ENCODE measurements at regions of chr7 and their contacts with region 1.

Region 1: GRCh38 chr7:51141451-51142003 is 175.1 kb downstream of the COBL start:
- DNase-seq: peak; percentile 16
- ATAC-seq: peak; percentile 24
- H3K4me3 Mint-ChIP-seq: no peak overlapping the region
- H3K27ac Mint-ChIP-seq: no peak overlapping the region
- H3K4me1 Mint-ChIP-seq: peaks cover 3% of the 10 kb centered on the region
- H3K27me3 Mint-ChIP-seq: no peaks in the 10 kb centered on the region
- CTCF ChIP-seq: peak; percentile 69

Region 2: DNA sequence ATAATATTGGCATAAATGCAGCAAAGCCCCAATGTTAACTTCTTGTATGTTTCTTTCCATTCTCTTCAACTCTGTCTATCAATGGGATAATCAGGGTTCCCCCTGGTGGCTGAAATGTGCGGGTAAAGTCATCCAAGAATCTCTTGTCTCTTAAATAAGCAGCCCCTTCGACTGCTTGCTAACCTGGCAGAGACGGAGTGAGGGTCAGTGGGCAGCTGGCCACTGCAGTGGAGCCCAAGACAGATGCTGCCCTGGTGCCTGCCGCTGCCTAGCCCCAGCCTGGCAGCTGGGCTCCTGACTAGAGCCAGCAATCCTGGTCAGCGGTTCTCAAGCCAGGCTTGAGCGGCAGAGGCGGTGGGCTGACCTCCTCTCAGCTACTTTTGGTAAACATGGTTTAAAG is 73.8 kb before region 1 on chr7:
- CTCF ChIA-PET with region 1: interaction called, 12 read pairs
- POLR2A ChIA-PET with region 1: no interaction called
- intact Hi-C with region 1: no loop called
- DNase-seq: peak; percentile 75
- ATAC-seq: no peak
- H3K4me3 Mint-ChIP-seq: no peak overlapping the region
- H3K27ac Mint-ChIP-seq: no peak overlapping the region
- H3K4me1 Mint-ChIP-seq: no peaks in the 10 kb centered on the region
- H3K27me3 Mint-ChIP-seq: no peaks in the 10 kb centered on the region
- CTCF ChIP-seq: peak; percentile 13

Region 3: GRCh38 chr7:51154201-51154600 is 12.7 kb after region 1 on chr7:
- CTCF ChIA-PET with region 1: interaction called, 10 read pairs
- POLR2A ChIA-PET with region 1: no interaction called
- intact Hi-C with region 1: no loop called
- DNase-seq: no peak
- ATAC-seq: no peak
- H3K4me3 Mint-ChIP-seq: no peak overlapping the region
- H3K27ac Mint-ChIP-seq: no peak overlapping the region
- H3K4me1 Mint-ChIP-seq: no peaks in the 10 kb centered on the region
- H3K27me3 Mint-ChIP-seq: peaks cover 4% of the 10 kb centered on the region
- CTCF ChIP-seq: no peak

Measured in activated CD8-positive, alpha-beta T cell treated with anti-CD3 and anti-CD28 coated beads for 36 hours (primary cell).